Mucosa of descending colon (tissue), 3 donors: ENCODE measurements at regions of chr4 and their contacts with region 1.

Region 1: DNA sequence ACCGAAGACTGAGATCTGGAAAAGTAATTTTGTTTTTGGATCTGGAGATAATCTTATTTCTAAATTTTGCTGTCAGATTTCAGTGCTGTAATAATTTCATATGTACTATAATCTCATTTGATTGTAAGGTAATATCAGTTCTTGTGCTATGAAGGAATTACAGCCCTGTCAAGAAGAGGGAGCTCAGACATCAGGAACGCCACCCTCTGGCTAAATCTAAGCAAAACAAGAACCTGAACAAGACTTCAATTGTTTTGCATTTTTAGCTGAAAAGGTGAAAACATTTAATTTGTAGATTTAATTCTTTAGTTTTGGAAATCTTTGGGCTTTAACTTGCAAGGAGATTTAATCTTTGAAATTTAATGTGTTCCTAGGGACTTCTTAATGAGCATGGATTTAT is 525.4 kb upstream of the HS3ST1 start:
- DNase-seq: peak in 1 of 3 donors; percentile 54
- ATAC-seq: peak; percentile 54
- H3K4me3 ChIP-seq: no peak overlapping the region
- H3K4me1 ChIP-seq: no peaks in the 10 kb centered on the region
- CTCF ChIP-seq: peak; percentile 31

Region 2: DNA sequence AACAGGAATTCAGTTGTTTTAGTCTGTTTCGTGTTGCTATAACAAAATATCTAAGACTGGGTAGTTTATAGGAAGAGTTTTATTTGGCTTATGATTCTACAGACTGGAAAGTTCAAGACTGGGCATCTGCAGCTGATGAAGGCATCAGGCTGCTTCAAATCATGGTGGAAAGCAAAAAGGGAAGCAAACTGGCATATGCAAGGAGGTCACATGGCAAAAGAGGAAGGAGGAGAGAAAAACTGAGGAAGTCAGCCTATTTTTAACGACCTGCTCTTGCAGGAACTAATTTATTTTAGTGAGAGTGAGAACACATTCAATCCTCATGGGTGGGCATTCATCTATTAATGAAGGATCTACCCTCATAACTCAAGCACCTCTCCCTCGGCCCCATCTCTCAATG is 162.3 kb before region 1 on chr4:
- intact Hi-C with region 1: no loop called
- DNase-seq: no peak
- ATAC-seq: no peak
- H3K4me3 ChIP-seq: no peak overlapping the region
- H3K4me1 ChIP-seq: no peaks in the 10 kb centered on the region
- CTCF ChIP-seq: no peak

Region 3: GRCh38 chr4:11805842-11806241 is 148.3 kb before region 1 on chr4:
- intact Hi-C with region 1: loop called in 1 of 2 experiments (anchors 5 kb)
- DNase-seq: peak in 1 of 3 donors; percentile 10
- ATAC-seq: peak; percentile 78
- H3K4me3 ChIP-seq: no peak overlapping the region
- H3K4me1 ChIP-seq: no peaks in the 10 kb centered on the region
- CTCF ChIP-seq: peak; percentile 15